GM18951 (cell line): ENCODE measurements at regions of chr19 and their contacts with region 1.

Region 1: DNA sequence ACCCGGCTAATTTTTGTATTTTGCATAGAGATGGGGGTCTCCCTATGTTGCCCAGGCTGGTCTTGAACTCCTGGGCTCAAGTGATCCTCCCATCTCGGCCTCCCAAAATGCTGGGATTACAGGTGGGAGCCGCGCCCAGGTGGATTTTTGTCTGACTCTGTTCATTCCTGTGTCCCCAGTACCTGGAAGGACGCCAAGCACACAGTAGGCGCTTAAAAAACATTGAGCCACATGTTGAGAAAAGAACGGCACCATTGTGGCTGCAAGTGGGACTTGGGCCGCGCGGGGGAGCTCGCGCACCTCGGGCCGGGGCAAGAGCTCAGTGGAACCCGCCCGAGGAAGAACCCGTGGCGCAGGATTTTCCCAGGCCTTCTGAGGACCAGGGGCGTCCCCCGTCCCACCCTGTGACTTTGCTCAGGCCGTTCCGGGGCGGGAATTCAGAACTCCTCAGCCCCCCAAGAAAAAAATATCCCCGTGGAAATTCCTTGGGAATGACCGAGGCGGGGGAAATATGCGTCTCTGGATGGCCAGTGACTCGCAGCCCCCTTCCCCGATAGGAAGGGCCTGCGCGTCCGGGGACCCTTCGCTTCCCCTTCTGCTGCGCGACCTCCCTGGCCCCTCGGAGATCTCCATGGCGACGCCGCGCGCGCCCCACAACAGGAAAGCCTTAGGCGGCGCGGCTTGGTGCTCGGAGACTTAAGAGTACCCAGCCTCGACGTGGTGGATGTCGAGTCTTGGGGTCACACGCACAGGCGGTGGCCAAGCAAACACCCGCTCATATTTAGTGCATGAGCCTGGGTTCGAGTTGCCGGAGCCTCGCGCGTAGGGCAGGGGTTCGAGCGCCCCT is 1.4 kb upstream of the ICAM1 start:
- POLR2A ChIP-seq: no peak

Region 2: GRCh38 chr19:10380313-10381102 is 111.0 kb after region 1 on chr19 and contains the start of gene TYK2:
- in situ Hi-C with region 1: loop called (anchors 5 kb)
- POLR2A ChIP-seq: peak; percentile 88